Activated naive CD4-positive, alpha-beta T cell treated with anti-CD3 and anti-CD28 coated beads for 36 hours (primary cell): ENCODE measurements at regions of chr2 and their contacts with region 1.

Region 1: GRCh38 chr2:148653437-148653836 is 8.9 kb downstream of the EPC2 start:
- DNase-seq: no peak
- H3K4me3 Mint-ChIP-seq: peak overlapping the region; percentile 59
- H3K27ac Mint-ChIP-seq: peak overlapping the region; percentile 48
- H3K4me1 Mint-ChIP-seq: peaks cover 91% of the 10 kb centered on the region
- H3K27me3 Mint-ChIP-seq: no peaks in the 10 kb centered on the region

Region 2: GRCh38 chr2:148674063-148675020 is 20.9 kb after region 1 on chr2:
- CTCF ChIA-PET with region 1: interaction called, 4 read pairs
- intact Hi-C with region 1: loop called (anchors 2 kb)
- DNase-seq: peak; percentile 58
- H3K4me3 Mint-ChIP-seq: no peak overlapping the region
- H3K27ac Mint-ChIP-seq: no peak overlapping the region
- H3K4me1 Mint-ChIP-seq: peaks cover 68% of the 10 kb centered on the region
- H3K27me3 Mint-ChIP-seq: no peaks in the 10 kb centered on the region

Region 3: DNA sequence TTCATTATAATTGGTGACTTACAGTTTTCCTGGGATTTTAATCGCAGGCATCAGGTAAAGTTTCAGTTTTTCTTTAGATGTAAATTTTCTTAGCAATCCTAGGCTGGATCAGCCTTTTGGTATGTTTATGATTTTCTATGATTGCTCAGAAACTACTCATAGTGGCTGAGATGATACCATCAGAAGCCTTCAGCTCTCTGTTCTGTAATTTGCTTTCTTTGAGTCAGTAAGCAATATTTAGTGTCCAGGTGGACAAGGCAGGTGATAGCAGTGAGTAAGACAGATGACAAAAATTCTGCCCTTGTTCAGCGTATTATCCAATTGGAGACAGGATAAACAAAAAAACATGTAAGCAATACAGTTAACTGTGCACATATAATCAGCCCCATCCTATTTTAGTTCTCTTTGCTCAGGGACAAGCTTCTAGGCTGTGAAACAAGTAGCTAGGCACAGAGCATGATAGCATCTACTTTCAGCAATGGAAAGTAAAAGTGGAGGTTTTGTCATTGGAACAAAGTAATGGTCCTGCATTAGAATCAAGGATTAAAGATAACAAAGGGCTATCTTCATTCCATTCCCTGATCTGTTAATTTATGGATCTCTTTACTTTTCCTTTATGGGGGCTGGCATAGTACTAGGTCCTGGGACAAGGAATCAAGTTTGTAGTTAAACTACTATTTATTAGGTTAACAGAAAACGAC is 91.9 kb after region 1 on chr2:
- CTCF ChIA-PET with region 1: no interaction called
- intact Hi-C with region 1: loop called (anchors 5 kb)
- DNase-seq: no peak
- H3K4me3 Mint-ChIP-seq: no peak overlapping the region
- H3K27ac Mint-ChIP-seq: no peak overlapping the region
- H3K4me1 Mint-ChIP-seq: peaks cover 50% of the 10 kb centered on the region
- H3K27me3 Mint-ChIP-seq: no peaks in the 10 kb centered on the region